CD8-positive, alpha-beta memory T cell (primary cell): ENCODE measurements at regions of chr10 and their contacts with region 1.

Region 1: DNA sequence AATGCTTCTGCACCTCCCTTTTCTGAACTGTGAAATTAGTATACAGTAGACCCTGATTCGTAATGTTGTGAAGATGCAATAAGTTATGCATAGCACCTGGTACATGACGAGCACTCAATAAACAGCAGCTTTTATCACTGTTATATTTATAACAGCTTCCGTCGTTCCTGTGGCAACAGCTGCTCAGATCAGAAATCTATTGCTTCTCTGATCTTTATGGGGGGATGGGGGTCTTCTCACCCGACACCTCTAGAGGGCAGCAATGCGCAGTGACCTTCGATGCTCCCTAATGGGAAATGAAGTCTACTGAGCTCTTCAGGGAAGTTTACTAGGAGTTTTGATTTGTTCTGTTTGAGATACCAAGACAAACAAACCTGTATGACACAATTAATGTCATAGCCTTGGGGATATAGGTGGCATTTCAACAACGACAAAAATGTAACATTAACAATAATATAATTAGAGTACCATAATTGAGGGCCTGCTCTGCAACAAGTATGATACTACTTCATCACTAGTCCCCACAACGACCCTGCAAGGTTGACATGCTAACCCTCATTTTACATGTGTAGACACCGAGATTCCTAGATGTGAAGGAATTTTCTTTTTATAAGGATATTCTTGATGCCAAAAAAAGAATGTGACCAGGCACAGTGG is 289.6 kb downstream of the SFMBT2 start:
- DNase-seq: peak; percentile 44 to 88 (median 73)
- H3K4me3 ChIP-seq: no peak overlapping the region
- H3K4me3 Mint-ChIP-seq: peak overlapping the region in 1 of 7 donors; percentile 1
- H3K27ac ChIP-seq: no peak overlapping the region
- H3K27ac Mint-ChIP-seq: peak overlapping the region in 7 of 8 donors; percentile 12 to 88 (median 76)
- H3K4me1 ChIP-seq: peaks cover 7% of the 10 kb centered on the region
- H3K4me1 Mint-ChIP-seq: peaks cover 9 to 14% (median 13%) of the 10 kb centered on the region in 3 donors
- H3K27me3 ChIP-seq: no peaks in the 10 kb centered on the region
- H3K27me3 Mint-ChIP-seq: peaks cover 0 to under 1% of the 10 kb centered on the region in 2 donors

Region 2: GRCh38 chr10:6929148-6929830 is 192.0 kb before region 1 on chr10:
- CTCF ChIA-PET with region 1: interaction called, 12 read pairs
- POLR2A ChIA-PET with region 1: no interaction called
- DNase-seq: no peak
- H3K4me3 ChIP-seq: no peak overlapping the region
- H3K4me3 Mint-ChIP-seq: peak overlapping the region in 5 of 7 donors; percentile 12 to 91 (median 59)
- H3K27ac ChIP-seq: no peak overlapping the region
- H3K27ac Mint-ChIP-seq: peak overlapping the region; percentile 17 to 97 (median 70)
- H3K4me1 ChIP-seq: peaks cover 52% of the 10 kb centered on the region
- H3K4me1 Mint-ChIP-seq: peaks cover 55 to 57% (median 57%) of the 10 kb centered on the region in 3 donors
- H3K27me3 ChIP-seq: no peaks in the 10 kb centered on the region
- H3K27me3 Mint-ChIP-seq: no peaks in the 10 kb centered on the region

Region 3: GRCh38 chr10:7084280-7085005 is 36.8 kb before region 1 on chr10:
- CTCF ChIA-PET with region 1: no interaction called
- POLR2A ChIA-PET with region 1: no interaction called
- DNase-seq: no peak
- H3K4me3 ChIP-seq: no peak overlapping the region
- H3K4me3 Mint-ChIP-seq: no peak overlapping the region
- H3K27ac ChIP-seq: no peak overlapping the region
- H3K27ac Mint-ChIP-seq: no peak overlapping the region
- H3K4me1 ChIP-seq: no peaks in the 10 kb centered on the region
- H3K4me1 Mint-ChIP-seq: no peaks in the 10 kb centered on the region
- H3K27me3 ChIP-seq: no peaks in the 10 kb centered on the region
- H3K27me3 Mint-ChIP-seq: peaks cover 0 to 5% of the 10 kb centered on the region in 2 donors

Region 4: DNA sequence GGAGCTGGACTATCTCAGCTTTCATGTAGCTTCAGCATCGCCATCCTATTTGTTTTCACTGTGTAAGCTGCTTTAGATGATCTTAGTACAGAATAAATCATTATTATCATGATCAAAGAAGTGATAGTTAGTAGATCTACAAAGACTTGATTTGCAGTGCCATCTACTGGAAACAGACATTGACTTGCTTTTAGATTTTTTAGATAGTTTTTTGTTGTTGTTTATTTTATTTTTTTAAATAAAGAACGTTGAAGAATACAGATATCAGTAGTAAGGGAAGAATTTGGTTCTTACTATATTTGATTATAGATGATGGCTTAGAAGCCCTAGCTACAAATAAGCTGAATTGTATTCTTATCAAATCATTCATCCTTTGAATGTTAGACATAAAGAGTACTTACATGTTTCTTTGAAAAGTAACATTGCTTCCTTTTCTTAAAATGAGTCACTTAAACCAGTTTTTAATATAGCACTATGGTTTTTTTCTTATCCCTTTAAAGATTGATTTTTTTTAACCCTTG is 295.9 kb after region 1 on chr10:
- CTCF ChIA-PET with region 1: interaction called, 14 read pairs
- POLR2A ChIA-PET with region 1: interaction called, 3 read pairs
- DNase-seq: peak in 2 of 5 donors; percentile 36 to 45
- H3K4me3 ChIP-seq: no peak overlapping the region
- H3K4me3 Mint-ChIP-seq: peak overlapping the region in 1 of 7 donors; percentile 66
- H3K27ac ChIP-seq: no peak overlapping the region
- H3K27ac Mint-ChIP-seq: peak overlapping the region in 1 of 8 donors; percentile 76
- H3K4me1 ChIP-seq: peaks cover 12% of the 10 kb centered on the region
- H3K4me1 Mint-ChIP-seq: peaks cover 14 to 21% (median 17%) of the 10 kb centered on the region in 3 donors
- H3K27me3 ChIP-seq: no peaks in the 10 kb centered on the region
- H3K27me3 Mint-ChIP-seq: peaks cover 0 to 4% of the 10 kb centered on the region in 2 donors